Dendritic cell treated with granulocyte-macrophage colony-stimulating factor and Interleukin-4, amounts not matched to agents 40 ng/mL and 50 ng/mL, for 4 days (primary cell): ENCODE measurements at regions of chr3 and their contacts with region 1.

Region 1: GRCh38 chr3:48609088-48610005 is at the start of gene UQCRC1:
- H3K4me3 Mint-ChIP-seq: peak within 1 kb of the TSS; percentile 100
- H3K27ac Mint-ChIP-seq: peak within 1 kb of the TSS; percentile 100
- H3K4me1 Mint-ChIP-seq: peaks cover 43% of the 10 kb centered on the region
- H3K27me3 Mint-ChIP-seq: no peaks in the 10 kb centered on the region

Region 2: GRCh38 chr3:48556793-48557626 is 52.3 kb before region 1 on chr3 and contains the start of gene PFKFB4:
- intact Hi-C with region 1: loop called (anchors 5 kb)
- H3K4me3 Mint-ChIP-seq: peak within 1 kb of the TSS; percentile 85
- H3K27ac Mint-ChIP-seq: peak within 1 kb of the TSS; percentile 98
- H3K4me1 Mint-ChIP-seq: peaks cover 93% of the 10 kb centered on the region
- H3K27me3 Mint-ChIP-seq: no peaks in the 10 kb centered on the region

Region 3: GRCh38 chr3:48635222-48636021 is 26.1 kb after region 1 on chr3 and contains the start of gene SLC26A6:
- intact Hi-C with region 1: loop called (anchors 1 kb)
- H3K4me3 Mint-ChIP-seq: peak within 1 kb of the TSS; percentile 88
- H3K27ac Mint-ChIP-seq: peak within 1 kb of the TSS; percentile 86
- H3K4me1 Mint-ChIP-seq: peaks cover 40% of the 10 kb centered on the region
- H3K27me3 Mint-ChIP-seq: peaks cover 3% of the 10 kb centered on the region

Region 4: DNA sequence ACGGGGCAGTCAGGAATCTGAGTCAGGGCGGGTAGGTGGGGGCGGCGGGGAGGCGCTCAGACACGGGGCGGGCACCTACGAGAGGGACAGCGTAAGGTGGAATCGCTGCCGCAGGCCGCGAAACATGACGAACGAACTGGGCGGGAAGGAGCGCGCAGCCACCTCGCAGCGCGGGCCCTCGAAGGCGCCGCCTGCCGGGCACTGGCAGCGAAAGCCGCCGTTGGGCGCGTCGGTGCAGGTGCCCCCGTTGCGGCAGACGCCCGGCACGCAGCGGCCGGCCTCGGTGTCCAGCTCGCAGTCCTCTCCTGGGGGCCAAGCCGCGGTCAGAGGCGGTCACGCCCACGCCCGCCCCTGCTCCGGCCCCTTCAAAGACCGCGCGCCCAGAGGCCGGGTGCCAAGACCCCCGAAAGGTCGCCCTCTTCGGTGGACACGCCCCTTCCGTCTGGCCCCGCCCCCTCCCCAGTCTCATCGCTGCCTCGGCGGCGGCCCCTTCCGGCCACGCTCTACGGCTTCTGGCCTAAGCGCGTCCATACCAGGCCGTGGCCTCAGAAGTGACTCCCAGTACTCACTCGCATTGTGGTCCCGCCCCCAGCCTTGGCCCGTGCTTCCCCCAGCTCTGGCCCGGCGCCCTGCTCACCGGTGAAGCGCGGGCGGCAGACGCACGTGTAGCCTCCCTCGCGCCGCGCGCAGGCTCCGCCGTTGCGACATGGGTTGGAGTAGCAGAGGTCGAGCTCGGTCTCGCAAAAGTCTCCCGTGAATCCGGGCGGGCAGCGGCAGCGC is 46.9 kb after region 1 on chr3:
- intact Hi-C with region 1: loop called (anchors 2 kb)
- H3K4me3 Mint-ChIP-seq: peak overlapping the region; percentile 69
- H3K27ac Mint-ChIP-seq: peak overlapping the region; percentile 75
- H3K4me1 Mint-ChIP-seq: peaks cover 14% of the 10 kb centered on the region
- H3K27me3 Mint-ChIP-seq: peaks cover 56% of the 10 kb centered on the region

Region 5: DNA sequence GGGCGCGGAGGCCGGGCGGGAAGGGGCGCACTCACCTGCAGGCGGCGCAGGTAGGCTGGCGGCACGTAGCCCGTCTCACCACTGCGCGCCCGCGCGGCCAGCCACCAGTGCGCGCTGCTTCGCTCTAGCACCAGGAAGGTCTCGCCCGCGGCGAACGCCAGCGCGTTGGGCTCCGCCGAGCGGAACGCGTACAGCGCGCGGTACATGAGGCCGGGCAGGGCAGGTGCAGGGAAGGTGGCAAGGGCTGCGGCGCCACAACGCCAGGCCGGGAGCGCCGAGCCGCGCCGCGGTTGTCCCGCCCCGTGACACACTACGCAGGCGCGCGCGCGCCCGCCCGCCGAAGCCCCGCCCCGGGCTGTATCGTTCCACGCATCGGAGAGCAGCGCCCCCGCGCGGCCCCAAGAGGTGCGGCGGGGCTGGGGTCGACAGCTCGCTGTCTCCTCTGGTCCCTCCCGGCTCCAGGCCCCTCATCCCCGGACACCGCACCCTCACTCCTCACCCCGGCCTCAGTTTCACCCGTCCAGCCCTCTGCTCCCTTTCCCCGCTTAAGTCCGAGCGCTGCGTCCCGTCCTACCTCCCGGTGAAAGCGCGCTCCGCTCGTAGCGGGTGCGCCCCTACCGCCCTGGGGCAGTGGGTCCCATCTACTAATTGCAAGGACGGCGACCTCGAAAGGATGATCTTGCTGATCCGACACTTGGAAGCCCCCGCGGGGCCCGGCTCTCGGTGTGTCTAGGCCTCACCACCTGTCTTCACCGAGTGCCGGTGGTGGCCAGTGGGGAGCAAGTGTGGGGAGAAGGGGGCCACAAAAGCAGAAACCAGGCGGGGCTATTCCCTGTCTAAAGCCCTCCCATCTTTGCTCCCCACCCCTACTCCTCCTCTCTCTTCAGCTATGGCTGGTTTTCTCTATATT is 76.5 kb after region 1 on chr3 and contains the start of gene NCKIPSD:
- intact Hi-C with region 1: loop called (anchors 2 kb)
- H3K4me3 Mint-ChIP-seq: peak within 1 kb of the TSS; percentile 87
- H3K27ac Mint-ChIP-seq: peak within 1 kb of the TSS; percentile 86
- H3K4me1 Mint-ChIP-seq: peaks cover 39% of the 10 kb centered on the region
- H3K27me3 Mint-ChIP-seq: peaks cover 1% of the 10 kb centered on the region

Region 6: GRCh38 chr3:48877671-48878070 is 268.3 kb after region 1 on chr3:
- intact Hi-C with region 1: no loop called
- H3K4me3 Mint-ChIP-seq: no peak overlapping the region
- H3K27ac Mint-ChIP-seq: peak overlapping the region; percentile 50
- H3K4me1 Mint-ChIP-seq: peaks cover 23% of the 10 kb centered on the region
- H3K27me3 Mint-ChIP-seq: no peaks in the 10 kb centered on the region